Sigmoid colon (tissue), 7 donors: ENCODE measurements at regions of chr1 and their contacts with region 1.

Region 1: DNA sequence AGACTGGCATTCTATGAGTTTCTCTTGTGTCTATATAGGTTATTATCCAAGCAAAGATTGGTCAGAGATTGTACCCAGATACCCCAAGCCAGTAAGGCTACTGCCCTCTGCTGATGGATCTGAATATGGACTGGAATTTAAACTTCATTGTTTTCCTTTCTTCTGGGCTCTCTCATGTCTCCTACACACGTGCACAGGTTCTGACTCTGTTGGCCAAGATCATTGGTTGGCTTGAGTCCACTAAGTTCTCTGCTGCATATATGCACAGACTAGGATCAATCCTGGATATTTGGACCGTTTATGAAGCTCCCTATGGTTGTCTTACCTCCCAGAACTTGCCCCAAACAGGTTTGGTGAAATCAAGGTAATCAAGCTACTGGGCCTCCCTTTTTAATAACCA is 69.7 kb downstream of the CC2D1B start:
- DNase-seq: no peak
- H3K4me3 ChIP-seq: no peak overlapping the region
- H3K27ac ChIP-seq: no peak overlapping the region
- H3K4me1 ChIP-seq: no peaks in the 10 kb centered on the region
- H3K27me3 ChIP-seq: no peaks in the 10 kb centered on the region
- CTCF ChIP-seq: peak; percentile 40 to 65 (median 58)
- EP300 ChIP-seq: no peak
- POLR2A ChIP-seq: no peak

Region 2: GRCh38 chr1:52056163-52056936 is 240.0 kb before region 1 on chr1 and contains the start of gene BTF3L4:
- intact Hi-C with region 1: loop called (anchors 10 kb)
- DNase-seq: peak; percentile 98
- H3K4me3 ChIP-seq: peak within 1 kb of the TSS; percentile 77 to 96 (median 83)
- H3K27ac ChIP-seq: peak within 1 kb of the TSS; percentile 88 to 94 (median 88)
- H3K4me1 ChIP-seq: peaks cover 0 to 46% (median 33%) of the 10 kb centered on the region in 4 donors
- H3K27me3 ChIP-seq: no peaks in the 10 kb centered on the region
- CTCF ChIP-seq: no peak
- EP300 ChIP-seq: no peak
- POLR2A ChIP-seq: peak; percentile 25 to 69
- total RNA-seq, gene BTF3L4: 42.9 to 58.1 (median 51.1) TPM

Region 3: GRCh38 chr1:52127181-52128180 is 168.9 kb before region 1 on chr1:
- intact Hi-C with region 1: loop called (anchors 2 kb)
- DNase-seq: no peak
- H3K4me3 ChIP-seq: no peak overlapping the region
- H3K27ac ChIP-seq: no peak overlapping the region
- H3K4me1 ChIP-seq: no peaks in the 10 kb centered on the region
- H3K27me3 ChIP-seq: no peaks in the 10 kb centered on the region
- CTCF ChIP-seq: peak; percentile 30 to 56 (median 50)
- EP300 ChIP-seq: no peak
- POLR2A ChIP-seq: no peak